RWPE1 (cell line): ENCODE measurements at regions of chr19 and their contacts with region 1.

Region 1: GRCh38 chr19:10269333-10270179 is 1.4 kb upstream of the ICAM1 start:
- DNase-seq: peak; percentile 69
- H3K27ac ChIP-seq: no peak overlapping the region
- CTCF ChIP-seq: peak; percentile 96

Region 2: DNA sequence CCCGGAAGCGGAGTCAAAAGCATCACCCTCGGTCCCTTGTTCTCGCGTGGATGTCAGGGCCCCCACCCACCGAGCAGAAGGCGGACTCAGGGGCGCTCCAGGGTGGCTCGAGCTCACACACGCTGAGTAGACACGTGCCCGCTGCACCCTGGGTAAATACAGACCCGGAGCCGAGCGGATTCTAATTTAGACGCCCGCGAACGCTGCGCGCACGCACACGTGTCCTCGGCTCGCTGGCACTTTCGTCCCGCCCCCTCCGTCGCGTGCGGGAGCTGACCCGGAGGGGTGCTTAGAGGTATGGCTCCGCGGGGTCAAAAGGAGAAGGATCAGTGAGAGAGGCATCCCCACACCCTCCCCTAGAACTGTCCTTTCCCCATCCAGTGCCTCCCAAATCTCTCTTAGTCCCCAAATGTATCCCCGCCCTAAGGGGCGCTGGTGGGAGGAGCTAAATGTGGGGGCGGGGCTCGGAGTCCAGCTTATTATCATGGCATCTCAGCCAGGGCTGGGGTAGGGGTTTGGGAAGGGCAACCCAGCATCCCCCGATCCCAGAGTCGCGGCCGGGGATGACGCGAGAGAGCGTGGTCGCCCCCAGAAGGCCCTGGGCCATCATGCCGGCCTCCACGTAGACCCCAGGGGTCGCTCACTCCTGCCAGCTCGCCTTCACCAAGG is 19.7 kb after region 1 on chr19:
- CTCF ChIA-PET with region 1: interaction called, 11 read pairs
- POLR2A ChIA-PET with region 1: interaction called, 15 read pairs
- DNase-seq: peak; percentile 79
- H3K27ac ChIP-seq: peak overlapping the region; percentile 93
- CTCF ChIP-seq: no peak

Region 3: DNA sequence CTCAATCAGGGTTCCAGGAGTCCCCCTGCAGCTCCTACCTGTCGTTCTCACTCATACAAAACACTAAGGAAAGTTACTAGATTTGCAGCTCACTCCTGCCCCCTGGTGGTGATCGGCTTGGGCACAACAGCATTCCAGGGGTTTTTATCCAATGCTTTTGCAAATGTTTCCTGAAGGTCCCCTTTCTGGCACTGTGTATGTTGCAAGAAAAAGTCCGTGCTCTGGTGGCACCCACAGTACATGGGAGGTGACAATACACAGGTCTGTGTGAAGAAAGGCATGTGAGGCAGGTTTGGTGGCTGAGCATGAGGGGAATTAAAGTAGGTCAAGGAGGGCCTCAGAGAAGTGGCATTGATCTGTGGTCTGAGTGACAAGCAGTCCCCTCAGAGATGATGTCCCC is 119.4 kb after region 1 on chr19:
- CTCF ChIA-PET with region 1: interaction called, 31 read pairs
- POLR2A ChIA-PET with region 1: interaction called, 6 read pairs
- DNase-seq: peak; percentile 64
- H3K27ac ChIP-seq: no peak overlapping the region
- CTCF ChIP-seq: peak; percentile 90